ENCODE measurements at regions of chr16 and their contacts with region 1.

Region 1: GRCh38 chr16:54846766-54847165 is 83.9 kb upstream of the IRX5 start:
- DNase-seq: no peak

Region 2: DNA sequence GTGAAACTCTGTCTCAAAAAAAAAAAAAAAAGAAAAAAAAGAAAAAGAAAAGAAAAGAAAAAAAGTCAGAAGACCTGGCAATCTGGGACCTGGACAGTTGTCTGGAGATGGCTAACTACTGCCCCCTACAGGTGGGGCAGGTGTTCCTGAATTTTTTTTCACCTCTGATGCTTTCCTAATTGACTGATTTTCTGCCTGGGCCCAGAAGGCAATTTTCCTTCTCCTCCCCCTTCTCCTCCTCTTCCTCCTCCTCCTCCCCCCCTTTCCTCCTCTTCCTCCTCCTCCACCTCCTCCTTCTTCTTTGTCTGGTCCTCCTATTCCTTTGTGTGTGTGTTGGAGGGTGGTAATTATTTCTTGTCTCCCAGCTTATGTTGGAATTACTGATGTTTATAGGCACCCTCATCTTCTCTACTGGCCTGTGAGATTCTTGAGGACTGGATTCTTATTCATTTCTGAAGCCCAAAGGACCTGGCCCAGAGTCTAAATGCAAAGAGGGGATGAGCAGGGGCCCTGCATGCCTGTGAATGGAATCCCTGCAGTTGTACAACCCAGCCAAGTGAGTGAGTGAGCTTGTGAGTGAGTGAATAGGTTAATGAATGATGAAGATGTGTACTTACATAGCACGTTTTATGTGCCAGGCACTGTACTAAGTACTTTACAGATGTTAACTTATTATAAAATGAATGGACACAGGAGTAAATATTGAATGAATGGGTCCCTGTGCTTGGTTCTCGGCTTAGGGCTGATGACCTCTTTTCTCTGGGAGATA is 110.8 kb after region 1 on chr16:
- intact Hi-C with region 1: no loop called
- DNase-seq: no peak

Region 3: DNA sequence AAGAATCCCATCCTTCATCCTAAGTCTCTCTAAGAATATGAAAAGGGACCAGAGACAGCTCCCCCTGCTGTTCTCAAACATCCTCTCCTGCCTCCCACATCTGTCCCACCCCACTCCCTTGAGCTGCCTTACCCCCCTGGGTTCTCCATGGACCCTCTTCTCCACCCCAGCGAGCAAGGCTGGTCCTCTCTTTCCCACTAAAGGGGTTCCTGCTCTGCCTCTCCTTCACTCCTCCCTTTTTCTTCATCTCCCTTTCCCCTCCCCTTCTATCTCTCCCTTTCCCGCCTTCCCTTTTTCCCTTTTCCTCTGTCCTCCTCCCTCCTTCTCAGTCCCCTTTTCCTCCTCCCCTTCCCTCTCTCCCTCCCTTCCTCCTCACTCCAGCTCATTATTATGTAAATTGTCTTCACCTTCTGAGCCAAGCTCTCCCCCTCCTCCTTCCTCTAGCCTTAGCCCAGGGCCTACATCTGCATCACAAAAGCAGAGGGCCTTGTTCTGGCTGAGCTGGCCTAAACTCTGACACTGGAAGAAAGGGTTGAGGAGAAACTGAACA is 1434.6 kb after region 1 on chr16:
- intact Hi-C with region 1: loop called in 1 of 2 experiments (anchors 5 kb)
- DNase-seq: no peak

Measured in posterior vena cava (tissue), 2 donors.